ENCODE measurements at regions of chr1 and their contacts with region 1.

Region 1: GRCh38 chr1:33127001-33127791 is 46.2 kb downstream of the AZIN2 start:
- DNase-seq: peak; percentile 99
- H3K4me3 Mint-ChIP-seq: peak overlapping the region; percentile 96
- H3K27ac Mint-ChIP-seq: peak overlapping the region; percentile 96
- H3K4me1 Mint-ChIP-seq: peaks cover 45% of the 10 kb centered on the region
- H3K27me3 Mint-ChIP-seq: no peaks in the 10 kb centered on the region

Region 2: DNA sequence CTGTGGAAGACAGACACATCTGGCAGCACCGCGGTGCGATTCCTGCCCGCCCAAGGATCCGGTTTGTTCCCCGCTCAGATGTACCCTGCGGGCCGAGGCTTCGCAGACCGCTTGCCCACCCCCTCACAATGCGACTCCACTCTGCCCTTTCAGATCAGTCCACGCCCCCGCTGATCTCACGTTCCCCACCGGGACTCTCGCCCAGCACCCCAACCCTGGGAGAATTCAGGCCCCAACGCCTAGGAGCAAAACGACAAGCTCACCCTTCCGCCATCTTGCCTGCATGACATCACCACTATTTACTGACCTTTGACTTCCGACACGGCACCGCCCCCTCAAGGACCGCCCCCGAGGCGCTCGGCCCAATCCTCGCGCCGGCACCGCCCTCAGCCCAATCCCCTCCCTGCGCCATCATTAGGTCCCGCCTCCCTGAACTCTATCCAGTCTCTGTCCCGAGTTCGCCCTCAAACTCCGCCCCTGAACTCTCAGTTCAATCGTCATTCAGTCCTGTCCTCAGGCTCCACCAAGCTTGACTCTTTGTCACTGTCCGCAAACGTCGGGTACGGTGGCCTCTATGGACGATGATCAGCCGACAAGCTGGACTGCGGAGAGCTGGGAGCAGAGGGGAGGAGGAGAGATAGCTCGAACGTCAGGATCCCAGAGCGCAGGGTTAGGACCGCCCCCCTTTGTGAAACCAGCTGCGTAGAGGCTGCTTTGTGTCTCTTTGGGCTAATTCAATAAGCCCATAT is 732.9 kb before region 1 on chr1 and contains the start of gene BSDC1:
- intact Hi-C with region 1: loop called (anchors 1 kb)
- DNase-seq: peak; percentile 98
- H3K4me3 Mint-ChIP-seq: peak within 1 kb of the TSS; percentile 97
- H3K27ac Mint-ChIP-seq: peak within 1 kb of the TSS; percentile 99
- H3K4me1 Mint-ChIP-seq: peaks cover 16% of the 10 kb centered on the region
- H3K27me3 Mint-ChIP-seq: peaks cover 7% of the 10 kb centered on the region
- total RNA-seq, gene BSDC1: 48.8 and 50.3 TPM in 2 replicates

Region 3: GRCh38 chr1:32964461-32965250 is 162.5 kb before region 1 on chr1 and contains the start of gene RNF19B:
- intact Hi-C with region 1: loop called (anchors 1 kb)
- DNase-seq: peak; percentile 94
- H3K4me3 Mint-ChIP-seq: peak within 1 kb of the TSS; percentile 84
- H3K27ac Mint-ChIP-seq: peak within 1 kb of the TSS; percentile 86
- H3K4me1 Mint-ChIP-seq: peaks cover 58% of the 10 kb centered on the region
- H3K27me3 Mint-ChIP-seq: peaks cover 1% of the 10 kb centered on the region
- total RNA-seq, gene RNF19B: 52.1 and 56.5 TPM in 2 replicates

Region 4: DNA sequence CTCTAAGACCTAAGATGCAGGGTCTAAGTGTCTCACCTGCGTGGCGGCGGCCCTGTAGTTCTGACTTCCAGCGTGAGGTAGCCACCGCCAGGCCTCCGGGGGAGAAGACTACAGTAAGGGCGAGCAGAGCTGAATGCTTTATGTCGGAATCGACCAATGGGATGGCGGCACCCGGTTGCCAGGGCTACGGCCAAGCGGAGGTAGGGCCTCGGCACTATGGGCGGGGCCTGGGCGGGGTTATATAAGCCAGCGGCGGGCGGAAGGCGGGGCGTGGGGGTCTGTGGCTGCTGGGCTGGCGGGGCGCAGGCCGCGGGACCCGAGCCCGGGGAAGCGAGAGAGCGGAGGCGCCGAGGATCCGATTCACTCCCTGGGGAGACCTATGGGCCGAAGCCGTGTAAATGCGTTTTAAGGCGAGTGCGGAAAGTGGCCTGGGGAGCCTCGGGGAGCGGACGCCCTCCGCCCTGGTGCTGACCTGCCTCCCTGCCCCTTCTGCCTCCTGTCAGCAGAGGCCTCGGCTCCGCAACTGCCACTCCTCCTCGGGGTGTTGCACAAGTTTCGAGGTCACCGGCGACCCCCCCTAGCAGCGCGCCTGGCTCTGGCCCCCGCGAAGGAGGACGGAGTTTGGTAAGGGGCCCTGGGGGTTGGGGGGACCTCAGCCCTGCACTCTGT is 46.2 kb before region 1 on chr1 and contains the start of gene AZIN2:
- intact Hi-C with region 1: loop called (anchors 1 kb)
- DNase-seq: peak; percentile 93
- H3K4me3 Mint-ChIP-seq: peak within 1 kb of the TSS; percentile 84
- H3K27ac Mint-ChIP-seq: no peak within 1 kb of the TSS
- H3K4me1 Mint-ChIP-seq: peaks cover 17% of the 10 kb centered on the region
- H3K27me3 Mint-ChIP-seq: peaks cover 36% of the 10 kb centered on the region
- total RNA-seq, gene AZIN2: 1.1 and 1.4 TPM in 2 replicates

Region 5: GRCh38 chr1:33256701-33257399 is 129.7 kb after region 1 on chr1:
- intact Hi-C with region 1: loop called (anchors 1 kb)
- DNase-seq: peak; percentile 41
- H3K4me3 Mint-ChIP-seq: peak overlapping the region; percentile 92
- H3K27ac Mint-ChIP-seq: peak overlapping the region; percentile 98
- H3K4me1 Mint-ChIP-seq: peaks cover 34% of the 10 kb centered on the region
- H3K27me3 Mint-ChIP-seq: peaks cover 11% of the 10 kb centered on the region

Region 6: GRCh38 chr1:33472349-33472980 is 345.3 kb after region 1 on chr1 and contains the start of gene ZSCAN20:
- intact Hi-C with region 1: loop called (anchors 1 kb)
- DNase-seq: peak; percentile 81
- H3K4me3 Mint-ChIP-seq: peak within 1 kb of the TSS; percentile 88
- H3K27ac Mint-ChIP-seq: peak within 1 kb of the TSS; percentile 68
- H3K4me1 Mint-ChIP-seq: peaks cover 24% of the 10 kb centered on the region
- H3K27me3 Mint-ChIP-seq: no peaks in the 10 kb centered on the region
- total RNA-seq, gene ZSCAN20: 2.5 and 2.8 TPM in 2 replicates

Measured in activated T-helper 1 cell treated with anti-CD3 and anti-CD28 coated beads, Interleukin-12 subunit alpha, Interleukin-12 subunit beta, Interleukin-2, Interleukin-4 antibody, amounts not matched to agents 30 ng/mL and 10 ng/mL and 1 ng/mL, durations not matched to agents 14 hours and 24 hours and 36 hours (primary cell).